Activated CD8-positive, alpha-beta T cell treated with anti-CD3 and anti-CD28 coated beads for 36 hours (primary cell): ENCODE measurements at regions of chr1 and their contacts with region 1.

Region 1: DNA sequence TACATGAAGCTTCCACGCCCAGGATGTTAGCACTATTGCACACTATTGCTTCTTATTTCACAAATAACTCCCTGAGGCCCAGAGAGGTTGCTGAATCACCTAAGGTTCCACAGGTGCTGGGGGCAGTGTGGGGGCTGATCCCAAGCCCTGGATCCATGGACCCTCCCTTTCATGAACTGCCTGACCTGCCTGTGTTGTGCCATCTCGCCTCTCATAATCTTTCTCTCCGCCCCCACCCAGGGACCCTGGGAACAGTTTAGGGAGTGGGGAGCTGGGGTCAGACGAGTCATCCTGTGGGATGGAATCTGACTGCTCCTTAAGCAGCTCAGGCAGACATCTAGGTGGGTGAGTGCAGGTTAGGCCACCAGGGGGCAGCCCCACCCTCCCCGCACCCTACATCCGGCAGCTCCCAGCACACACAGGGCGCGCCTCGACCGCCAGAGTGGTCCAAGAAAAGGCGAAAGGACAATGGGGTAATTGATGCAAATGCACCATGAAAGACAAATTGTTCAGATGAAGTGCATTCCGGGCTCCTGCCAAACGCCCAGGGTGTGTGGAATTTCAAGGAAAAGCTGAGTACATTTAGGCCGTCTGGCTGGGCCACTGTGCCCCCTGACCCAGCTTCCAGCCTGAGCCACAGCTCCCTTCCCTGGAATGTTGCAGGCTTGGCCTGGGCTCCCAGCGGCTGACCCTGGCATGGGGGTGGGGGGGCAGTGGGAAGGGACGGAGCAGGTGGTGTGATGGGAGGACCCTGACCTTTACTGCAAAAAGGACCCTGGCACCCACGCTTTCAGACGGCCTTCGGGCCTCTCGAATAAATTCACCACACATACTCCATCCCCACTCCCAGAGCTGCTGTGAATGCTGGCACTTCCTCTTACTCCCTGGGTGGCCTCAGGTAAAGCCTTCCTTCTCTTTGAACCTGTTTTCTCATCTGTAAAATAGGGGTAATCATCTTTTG is 20.8 kb downstream of the PHLDA3 start:
- DNase-seq: peak; percentile 84
- ATAC-seq: peak; percentile 98
- H3K4me3 Mint-ChIP-seq: no peak overlapping the region
- H3K27ac Mint-ChIP-seq: no peak overlapping the region
- H3K4me1 Mint-ChIP-seq: peaks cover 8% of the 10 kb centered on the region
- H3K27me3 Mint-ChIP-seq: peaks cover 16% of the 10 kb centered on the region
- CTCF ChIP-seq: peak; percentile 72

Region 2: DNA sequence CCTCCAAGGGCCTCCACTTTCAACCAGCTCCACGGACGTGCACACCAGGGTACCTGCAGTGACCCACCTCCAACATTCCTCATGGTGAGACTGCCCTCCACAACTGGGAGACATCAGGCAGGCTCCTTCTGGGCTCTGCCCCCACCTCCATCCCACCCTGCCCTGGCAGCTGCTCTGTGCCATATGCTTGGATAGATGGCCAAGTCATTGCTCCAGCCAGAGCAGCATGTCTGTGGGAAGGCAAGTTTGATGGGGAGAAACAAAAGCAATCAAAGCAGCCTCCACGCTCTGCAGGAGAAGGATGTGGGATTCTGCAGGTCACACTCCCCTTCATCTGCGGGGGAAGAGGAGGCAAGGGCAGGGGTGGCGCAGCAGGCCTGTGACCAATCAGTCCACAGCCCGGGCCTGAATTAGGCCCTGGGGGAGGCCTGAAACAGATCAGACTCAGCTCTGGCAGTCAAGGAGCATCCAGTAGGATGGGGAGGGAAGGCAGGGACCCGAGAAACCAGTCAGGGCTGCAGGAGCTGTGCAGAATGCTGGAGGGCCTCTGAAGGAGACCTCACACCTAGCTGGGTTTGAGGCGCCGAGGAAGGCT is 83.6 kb before region 1 on chr1:
- CTCF ChIA-PET with region 1: no interaction called
- POLR2A ChIA-PET with region 1: no interaction called
- intact Hi-C with region 1: no loop called
- DNase-seq: no peak
- ATAC-seq: no peak
- H3K4me3 Mint-ChIP-seq: no peak overlapping the region
- H3K27ac Mint-ChIP-seq: no peak overlapping the region
- H3K4me1 Mint-ChIP-seq: no peaks in the 10 kb centered on the region
- H3K27me3 Mint-ChIP-seq: peaks cover 6% of the 10 kb centered on the region
- CTCF ChIP-seq: no peak

Region 3: GRCh38 chr1:201436393-201436792 is 11.8 kb before region 1 on chr1:
- CTCF ChIA-PET with region 1: interaction called, 76 read pairs
- POLR2A ChIA-PET with region 1: interaction called, 3 read pairs
- intact Hi-C with region 1: no loop called
- DNase-seq: no peak
- ATAC-seq: no peak
- H3K4me3 Mint-ChIP-seq: no peak overlapping the region
- H3K27ac Mint-ChIP-seq: no peak overlapping the region
- H3K4me1 Mint-ChIP-seq: peaks cover 6% of the 10 kb centered on the region
- H3K27me3 Mint-ChIP-seq: peaks cover 17% of the 10 kb centered on the region
- CTCF ChIP-seq: no peak

Region 4: DNA sequence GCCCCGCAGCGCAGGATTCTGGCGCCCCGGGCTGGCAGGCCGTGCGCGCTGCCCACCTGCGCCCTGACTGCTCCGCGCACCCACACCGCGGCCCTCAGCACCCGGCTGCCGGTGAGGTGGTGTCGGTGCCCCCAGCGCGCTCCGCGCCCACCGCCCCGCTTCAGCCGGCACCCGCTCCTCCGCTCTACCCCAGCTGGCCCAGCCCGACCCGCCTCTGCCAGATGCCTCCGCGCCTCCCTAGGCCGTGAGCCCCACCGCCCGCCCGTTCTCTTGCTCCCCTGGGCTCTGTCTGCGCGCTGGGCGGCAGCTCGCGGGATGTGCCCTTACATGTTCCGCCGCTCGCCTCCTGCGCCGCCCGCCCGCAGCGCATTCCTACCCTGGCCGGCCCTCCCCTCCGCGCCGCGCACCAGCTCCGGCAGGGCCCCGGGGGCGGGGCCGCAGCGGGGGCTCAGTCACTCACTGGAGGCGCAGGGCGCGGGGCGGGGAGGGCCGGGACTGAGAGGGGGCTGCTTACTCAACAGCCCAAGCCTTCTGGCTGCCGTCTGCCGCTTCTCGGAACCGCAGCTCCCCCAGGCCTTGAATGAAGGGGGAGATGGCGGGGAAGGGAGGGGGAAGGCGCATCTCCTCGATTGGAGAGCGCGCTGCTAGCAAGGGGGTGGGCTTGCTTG is 20.8 kb after region 1 on chr1 and contains the start of gene PHLDA3:
- CTCF ChIA-PET with region 1: interaction called, 28 read pairs
- POLR2A ChIA-PET with region 1: no interaction called
- intact Hi-C with region 1: no loop called
- DNase-seq: peak; percentile 73
- ATAC-seq: peak; percentile 84
- H3K4me3 Mint-ChIP-seq: peak within 1 kb of the TSS; percentile 67
- H3K27ac Mint-ChIP-seq: no peak within 1 kb of the TSS
- H3K4me1 Mint-ChIP-seq: peaks cover 3% of the 10 kb centered on the region
- H3K27me3 Mint-ChIP-seq: peaks cover 48% of the 10 kb centered on the region
- CTCF ChIP-seq: no peak
- total RNA-seq, gene PHLDA3: 6.2 to 7.9 TPM

Region 5: DNA sequence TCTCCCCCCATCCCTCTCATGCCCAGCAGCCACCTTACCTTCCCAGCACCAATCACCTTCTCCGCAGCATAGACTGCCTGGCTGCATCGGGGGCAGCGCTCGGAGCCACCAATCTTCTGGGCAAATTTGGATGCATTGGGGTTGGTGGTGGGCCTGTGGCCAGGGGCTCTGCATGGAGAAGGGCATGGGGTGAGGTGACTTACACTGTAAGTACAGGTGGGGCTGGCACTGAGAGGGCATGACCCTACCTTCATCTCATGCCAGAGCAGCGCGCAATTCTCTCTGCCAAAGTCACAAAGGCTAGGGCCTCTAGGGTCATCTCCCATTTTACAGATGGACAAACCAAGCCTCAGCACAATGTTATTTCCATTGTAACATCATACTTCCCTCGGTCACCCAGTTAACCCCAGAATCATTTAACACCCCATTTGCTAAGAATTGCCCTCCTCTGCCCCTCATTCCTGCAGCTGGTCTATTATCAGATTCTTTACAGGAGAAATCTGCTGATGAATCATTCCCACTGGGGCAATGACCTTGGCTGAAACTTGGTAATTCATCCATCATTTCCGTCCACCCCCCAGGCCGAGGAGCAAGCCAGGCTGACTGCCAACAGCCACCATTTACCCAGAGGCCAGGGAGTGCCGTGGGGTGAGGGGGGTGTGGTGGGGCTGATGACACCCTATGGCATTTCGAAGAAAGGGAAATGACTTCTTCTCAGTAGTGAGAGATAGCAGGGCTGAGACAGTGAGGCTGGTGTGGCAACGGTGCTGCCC is 40.8 kb after region 1 on chr1:
- CTCF ChIA-PET with region 1: interaction called, 149 read pairs
- POLR2A ChIA-PET with region 1: no interaction called
- intact Hi-C with region 1: loop called (anchors 5 kb)
- DNase-seq: no peak
- ATAC-seq: no peak
- H3K4me3 Mint-ChIP-seq: no peak overlapping the region
- H3K27ac Mint-ChIP-seq: no peak overlapping the region
- H3K4me1 Mint-ChIP-seq: no peaks in the 10 kb centered on the region
- H3K27me3 Mint-ChIP-seq: no peaks in the 10 kb centered on the region
- CTCF ChIP-seq: no peak

Region 6: GRCh38 chr1:201506556-201507359 is 58.6 kb after region 1 on chr1 and contains the start of gene CSRP1:
- CTCF ChIA-PET with region 1: interaction called, 114 read pairs
- POLR2A ChIA-PET with region 1: no interaction called
- intact Hi-C with region 1: loop called (anchors 5 kb)
- DNase-seq: peak; percentile 89
- ATAC-seq: peak; percentile 97
- H3K4me3 Mint-ChIP-seq: peak within 1 kb of the TSS; percentile 92
- H3K27ac Mint-ChIP-seq: peak within 1 kb of the TSS; percentile 92
- H3K4me1 Mint-ChIP-seq: peaks cover 33% of the 10 kb centered on the region
- H3K27me3 Mint-ChIP-seq: no peaks in the 10 kb centered on the region
- CTCF ChIP-seq: no peak
- total RNA-seq, gene CSRP1: 55.3 to 56.2 TPM